GM12878 (cell line): ENCODE measurements at regions of chr22 and their contacts with region 1.

Region 1: GRCh38 chr22:17830043-17830961 is 56.0 kb upstream of the BID start:
- DNase-seq: peak; percentile 51
- ATAC-seq: peak; percentile 97
- H3K4me3 ChIP-seq: no peak overlapping the region
- H3K27ac ChIP-seq: no peak overlapping the region
- H3K4me1 ChIP-seq: no peaks in the 10 kb centered on the region
- H3K27me3 ChIP-seq: no peaks in the 10 kb centered on the region
- CTCF ChIP-seq: peak; percentile 98 to 99 (median 98)
- EP300 ChIP-seq: no peak
- POLR2A ChIP-seq: no peak
- RAD21 ChIP-seq: peak; percentile 97

Region 2: GRCh38 chr22:17554814-17555213 is 275.5 kb before region 1 on chr22:
- CTCF ChIA-PET with region 1: interaction called, 6 read pairs
- POLR2A ChIA-PET with region 1: no interaction called
- RAD21 ChIA-PET with region 1: interaction called, 7 read pairs
- SMC1A ChIA-PET with region 1: no interaction called
- in situ Hi-C with region 1: no loop called
- intact Hi-C with region 1: loop called (anchors 5 kb)
- DNase-seq: no peak
- ATAC-seq: no peak
- H3K4me3 ChIP-seq: no peak overlapping the region
- H3K27ac ChIP-seq: no peak overlapping the region
- H3K4me1 ChIP-seq: no peaks in the 10 kb centered on the region
- H3K27me3 ChIP-seq: no peaks in the 10 kb centered on the region; a peak in 1 of 4 replicates
- CTCF ChIP-seq: no peak
- EP300 ChIP-seq: no peak
- POLR2A ChIP-seq: no peak
- RAD21 ChIP-seq: no peak

Region 3: DNA sequence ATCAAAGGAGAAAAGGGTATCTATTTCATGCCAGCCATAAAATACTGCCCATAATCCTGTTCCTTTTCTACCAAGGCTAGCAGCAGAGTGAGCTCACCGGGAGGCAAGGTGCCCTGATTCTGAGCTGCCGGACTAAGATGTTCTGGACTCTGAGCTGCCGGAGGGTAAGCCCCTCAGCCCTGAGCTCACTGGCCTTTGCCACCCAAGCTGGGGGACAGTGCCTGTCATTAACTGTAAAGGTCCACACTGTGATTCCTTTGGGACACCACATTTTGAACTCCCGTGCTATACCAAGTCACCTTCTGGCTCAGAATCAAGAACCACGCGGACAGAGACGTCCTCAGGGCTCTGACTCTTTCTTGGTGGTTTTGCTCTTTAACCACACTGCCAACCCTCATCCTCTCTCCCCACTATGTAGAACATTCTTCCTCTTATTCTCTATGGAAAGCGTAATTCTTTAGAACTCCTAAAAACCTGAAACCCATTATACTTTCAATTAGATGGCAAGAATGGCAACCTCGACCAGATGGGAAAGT is 32.4 kb after region 1 on chr22:
- CTCF ChIA-PET with region 1: interaction called, 10 read pairs
- POLR2A ChIA-PET with region 1: no interaction called
- RAD21 ChIA-PET with region 1: no interaction called
- SMC1A ChIA-PET with region 1: no interaction called
- in situ Hi-C with region 1: no loop called
- intact Hi-C with region 1: no loop called
- DNase-seq: no peak
- ATAC-seq: no peak
- H3K4me3 ChIP-seq: no peak overlapping the region
- H3K27ac ChIP-seq: no peak overlapping the region
- H3K4me1 ChIP-seq: peaks cover 3% of the 10 kb centered on the region
- H3K27me3 ChIP-seq: no peaks in the 10 kb centered on the region
- CTCF ChIP-seq: no peak
- EP300 ChIP-seq: no peak
- POLR2A ChIP-seq: no peak
- RAD21 ChIP-seq: no peak

Region 4: DNA sequence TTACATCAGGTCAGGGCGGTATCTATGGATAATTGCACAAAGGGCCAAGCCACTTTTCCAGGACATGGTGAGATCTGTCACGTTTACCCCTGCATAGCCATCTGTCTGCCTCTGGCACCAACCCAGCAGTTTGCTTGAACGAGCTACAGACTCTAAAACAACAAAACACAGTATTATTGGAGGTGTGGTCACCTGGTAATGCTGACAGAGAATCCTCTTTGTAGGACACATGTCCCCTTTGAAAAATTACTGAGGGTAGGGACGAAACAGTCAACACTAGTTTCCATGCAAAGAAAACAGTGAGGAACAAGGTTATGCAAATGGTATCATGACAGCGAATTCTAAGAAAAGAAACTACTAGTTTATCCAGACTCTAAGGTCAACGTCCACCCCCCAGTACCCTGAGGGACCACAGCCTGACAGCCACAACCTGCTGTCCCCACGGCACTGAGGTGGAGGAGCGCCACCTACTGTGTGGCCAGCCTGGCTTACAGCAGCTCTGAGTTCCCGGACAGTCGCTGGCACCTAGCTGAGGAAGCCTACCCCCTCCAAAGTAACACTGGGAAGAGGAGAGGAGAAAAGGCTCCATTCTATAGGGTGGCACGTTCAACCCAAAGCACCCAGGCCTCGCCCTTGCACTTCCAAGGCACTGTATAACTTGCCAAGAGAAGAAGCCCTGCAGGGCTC is 61.3 kb after region 1 on chr22:
- CTCF ChIA-PET with region 1: interaction called, 13 read pairs
- POLR2A ChIA-PET with region 1: no interaction called
- RAD21 ChIA-PET with region 1: interaction called, 4 read pairs
- SMC1A ChIA-PET with region 1: interaction called, 3 read pairs
- in situ Hi-C with region 1: no loop called
- intact Hi-C with region 1: no loop called
- DNase-seq: no peak
- ATAC-seq: peak; percentile 62; the same call in 2 of the 3 replicates
- H3K4me3 ChIP-seq: no peak overlapping the region
- H3K27ac ChIP-seq: no peak overlapping the region
- H3K4me1 ChIP-seq: no peaks in the 10 kb centered on the region
- H3K27me3 ChIP-seq: no peaks in the 10 kb centered on the region
- CTCF ChIP-seq: peak; percentile 27 to 42 (median 36); a peak in 4 of 6 replicates
- EP300 ChIP-seq: no peak
- POLR2A ChIP-seq: no peak
- RAD21 ChIP-seq: peak; percentile 30

Region 5: DNA sequence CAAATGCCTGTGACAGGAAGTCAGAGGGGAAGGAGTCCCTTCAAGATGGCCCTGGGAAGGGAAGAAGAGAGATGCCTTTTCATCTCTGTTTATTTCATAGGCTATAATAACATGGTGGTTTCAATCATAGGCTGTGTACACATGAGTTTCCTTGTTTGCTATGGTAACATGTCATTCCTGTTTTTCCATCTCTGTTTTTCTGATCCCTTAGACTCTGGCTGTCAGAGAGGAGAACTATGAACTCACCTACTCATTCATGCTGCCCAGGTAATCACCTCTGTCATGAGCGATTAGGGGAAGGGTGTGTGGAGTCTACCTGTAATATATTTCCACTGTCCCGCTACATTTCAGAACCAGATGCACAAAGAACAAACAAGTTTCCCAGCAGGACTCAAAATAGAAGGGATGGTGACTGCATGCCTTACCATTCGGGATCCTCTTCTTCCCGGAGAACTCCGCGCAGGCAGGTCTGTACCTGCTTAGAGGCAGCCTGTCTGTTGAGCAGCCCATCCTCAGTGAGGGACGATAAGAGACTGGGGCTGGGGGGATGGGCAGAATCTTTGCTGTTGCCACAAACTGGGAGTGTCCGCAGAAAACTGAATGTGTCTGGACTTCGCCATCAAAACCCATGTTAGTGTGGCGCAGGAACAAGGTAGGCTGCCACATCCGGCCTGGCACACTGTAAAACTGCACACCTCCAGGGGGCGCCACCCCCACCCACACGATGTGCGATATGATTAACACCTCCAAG is 240.4 kb after region 1 on chr22:
- CTCF ChIA-PET with region 1: interaction called, 167 read pairs
- POLR2A ChIA-PET with region 1: interaction called, 5 read pairs
- RAD21 ChIA-PET with region 1: interaction called, 77 read pairs
- SMC1A ChIA-PET with region 1: interaction called, 93 read pairs
- in situ Hi-C with region 1: loop called (anchors 5 kb)
- intact Hi-C with region 1: no loop called
- DNase-seq: no peak
- ATAC-seq: no peak
- H3K4me3 ChIP-seq: no peak overlapping the region
- H3K27ac ChIP-seq: no peak overlapping the region
- H3K4me1 ChIP-seq: peaks cover 26% of the 10 kb centered on the region
- H3K27me3 ChIP-seq: no peaks in the 10 kb centered on the region
- CTCF ChIP-seq: peak in 2 of 3 experiments; percentile 43 to 49; a peak in 4 of 6 replicates
- EP300 ChIP-seq: no peak
- POLR2A ChIP-seq: no peak
- RAD21 ChIP-seq: no peak